ENCODE measurements at regions of chr22 and their contacts with region 1.

Region 1: DNA sequence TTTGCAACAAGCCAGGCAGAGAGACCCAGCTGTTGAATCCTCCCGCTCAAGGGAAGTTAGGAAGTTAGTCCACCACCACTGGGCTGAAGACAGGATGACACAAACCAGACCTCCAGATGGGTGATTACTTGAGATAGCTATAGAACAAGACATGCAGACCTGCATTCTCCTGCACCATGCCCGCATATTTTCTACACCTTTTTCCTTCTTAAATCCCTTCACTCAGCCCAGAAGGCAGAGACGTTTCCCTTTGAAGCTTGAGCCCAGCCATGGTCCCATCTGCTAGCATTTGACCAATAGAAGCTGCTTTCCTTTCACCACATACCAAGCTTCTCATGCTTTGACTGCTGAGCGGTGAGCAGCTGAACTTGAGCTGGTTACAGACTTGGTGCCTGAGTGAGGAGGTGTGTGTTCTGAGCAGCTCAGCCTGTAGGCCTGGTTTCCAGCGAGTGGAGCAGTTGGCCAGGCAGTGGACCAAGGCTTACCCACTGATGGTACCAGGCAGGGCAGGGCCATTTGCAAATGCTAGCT is 29.2 kb upstream of the CBX6 start:
- DNase-seq: no peak
- ATAC-seq: no peak
- H3K4me3 ChIP-seq: no peak overlapping the region
- H3K4me3 Mint-ChIP-seq: no peak overlapping the region
- H3K27ac ChIP-seq: no peak overlapping the region
- H3K27ac Mint-ChIP-seq: no peak overlapping the region
- H3K4me1 ChIP-seq: peaks cover 8% of the 10 kb centered on the region
- H3K4me1 Mint-ChIP-seq: peaks cover 18% of the 10 kb centered on the region
- H3K27me3 ChIP-seq: no peaks in the 10 kb centered on the region
- H3K27me3 Mint-ChIP-seq: peaks cover 13% of the 10 kb centered on the region
- CTCF ChIP-seq: no peak

Region 2: GRCh38 chr22:38953577-38954413 is 52.6 kb after region 1 on chr22:
- CTCF ChIA-PET with region 1: no interaction called
- POLR2A ChIA-PET with region 1: no interaction called
- intact Hi-C with region 1: loop called in 1 of 2 experiments (anchors 5 kb)
- DNase-seq: peak in 6 of 14 experiments; percentile 7 to 86 (median 32)
- ATAC-seq: peak; percentile 86
- H3K4me3 ChIP-seq: no peak overlapping the region
- H3K4me3 Mint-ChIP-seq: no peak overlapping the region
- H3K27ac ChIP-seq: peak overlapping the region in 1 of 2 donors; percentile 47
- H3K27ac Mint-ChIP-seq: peak overlapping the region; percentile 52
- H3K4me1 ChIP-seq: peaks cover 19% of the 10 kb centered on the region
- H3K4me1 Mint-ChIP-seq: no peaks in the 10 kb centered on the region
- H3K27me3 ChIP-seq: no peaks in the 10 kb centered on the region
- H3K27me3 Mint-ChIP-seq: peaks cover 3% of the 10 kb centered on the region
- CTCF ChIP-seq: no peak